ENCODE measurements at regions of chr14 and their contacts with region 1.

Region 1: DNA sequence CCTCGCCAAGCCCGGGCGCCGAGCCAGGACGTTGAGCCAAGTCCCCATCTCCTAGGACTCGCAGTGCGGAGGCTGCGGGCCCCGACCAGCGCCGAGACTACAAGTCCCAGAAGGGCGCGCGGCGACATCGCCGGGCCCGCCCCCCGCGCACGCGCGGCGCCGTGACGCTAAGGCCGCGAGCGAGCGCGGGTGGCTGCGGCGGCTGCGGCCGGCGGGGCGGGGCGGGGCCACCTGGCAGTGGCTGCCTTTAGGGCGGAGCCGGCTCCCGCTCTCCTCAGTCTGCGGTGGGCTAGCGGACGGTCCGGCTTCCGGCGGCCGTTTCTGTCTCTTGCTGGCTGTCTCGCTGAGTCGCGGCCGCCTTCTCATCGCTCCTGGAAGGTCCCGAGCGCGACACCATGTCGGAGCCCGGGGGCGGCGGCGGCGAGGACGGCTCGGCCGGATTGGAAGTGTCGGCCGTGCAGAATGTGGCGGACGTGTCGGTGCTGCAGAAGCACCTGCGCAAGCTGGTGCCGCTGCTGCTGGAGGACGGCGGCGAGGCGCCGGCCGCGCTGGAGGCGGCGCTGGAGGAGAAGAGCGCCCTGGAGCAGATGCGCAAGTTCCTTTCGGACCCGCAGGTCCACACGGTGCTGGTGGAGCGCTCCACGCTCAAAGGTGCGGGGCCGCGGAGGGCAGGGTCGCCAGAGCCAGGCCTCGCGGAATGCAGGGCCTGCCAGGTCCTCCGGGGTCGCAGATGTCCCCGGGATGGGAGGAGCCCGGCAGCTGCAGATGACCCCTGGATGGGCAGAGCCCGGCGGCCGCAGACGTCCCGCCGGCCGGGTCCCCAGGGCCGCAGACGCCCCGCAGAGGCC is at the start of gene DYNC1H1:
- DNase-seq: peak; percentile 89
- ATAC-seq: peak; percentile 81
- H3K4me3 Mint-ChIP-seq: peak within 1 kb of the TSS; percentile 89
- H3K27ac Mint-ChIP-seq: peak within 1 kb of the TSS; percentile 93
- H3K4me1 Mint-ChIP-seq: peaks cover 32% of the 10 kb centered on the region
- H3K27me3 Mint-ChIP-seq: no peaks in the 10 kb centered on the region
- CTCF ChIP-seq: no peak
- total RNA-seq, gene DYNC1H1: 291 to 301 TPM

Region 2: DNA sequence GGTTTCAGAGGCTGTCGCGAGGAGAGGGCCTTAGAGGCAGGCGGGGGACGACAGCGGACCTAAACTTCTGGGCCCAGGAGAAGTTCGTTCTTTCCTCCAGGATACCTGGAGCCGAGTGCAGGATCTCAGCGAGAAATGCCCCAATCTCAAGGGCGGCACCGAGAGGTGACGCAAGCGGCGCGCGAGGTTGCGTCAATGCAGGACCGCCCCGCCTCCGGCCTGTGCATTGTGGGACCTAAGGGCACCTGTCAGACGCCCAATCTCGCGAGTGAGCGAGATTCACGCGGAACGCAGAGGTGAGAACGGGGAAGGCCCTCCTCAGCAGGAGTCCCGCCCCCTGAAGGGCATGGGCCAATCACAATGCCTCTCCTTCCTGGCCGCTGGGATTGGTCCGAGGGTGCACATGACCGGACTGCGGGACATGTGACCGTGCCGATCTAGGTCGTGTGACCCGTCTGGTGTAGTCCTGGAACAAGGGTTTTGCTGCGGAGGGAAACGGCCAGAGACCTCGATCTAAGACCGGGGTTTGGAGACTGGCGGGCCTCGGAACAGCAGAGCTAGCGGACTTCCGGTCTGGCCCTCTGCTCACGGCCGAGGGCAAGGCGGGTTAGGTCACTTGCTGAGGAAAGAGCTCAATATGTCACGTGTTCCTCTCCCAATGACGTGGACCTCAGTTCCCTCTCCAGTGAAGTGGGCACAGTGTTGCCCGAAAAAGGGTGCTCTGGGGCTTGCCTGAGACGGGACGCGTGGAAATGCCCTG is 16.4 kb before region 1 on chr14:
- CTCF ChIA-PET with region 1: interaction called, 17 read pairs
- POLR2A ChIA-PET with region 1: interaction called, 13 read pairs
- intact Hi-C with region 1: no loop called
- DNase-seq: peak; percentile 100
- ATAC-seq: peak; percentile 99
- H3K4me3 Mint-ChIP-seq: peak overlapping the region; percentile 91
- H3K27ac Mint-ChIP-seq: peak overlapping the region; percentile 96
- H3K4me1 Mint-ChIP-seq: peaks cover 10% of the 10 kb centered on the region
- H3K27me3 Mint-ChIP-seq: peaks cover 18% of the 10 kb centered on the region
- CTCF ChIP-seq: no peak

Region 3: GRCh38 chr14:102039157-102039556 is 74.6 kb after region 1 on chr14:
- CTCF ChIA-PET with region 1: no interaction called
- POLR2A ChIA-PET with region 1: no interaction called
- intact Hi-C with region 1: no loop called
- DNase-seq: no peak
- ATAC-seq: no peak
- H3K4me3 Mint-ChIP-seq: no peak overlapping the region
- H3K27ac Mint-ChIP-seq: no peak overlapping the region
- H3K4me1 Mint-ChIP-seq: no peaks in the 10 kb centered on the region
- H3K27me3 Mint-ChIP-seq: no peaks in the 10 kb centered on the region
- CTCF ChIP-seq: no peak